ENCODE measurements at regions of chr22 and their contacts with region 1.

Region 1: DNA sequence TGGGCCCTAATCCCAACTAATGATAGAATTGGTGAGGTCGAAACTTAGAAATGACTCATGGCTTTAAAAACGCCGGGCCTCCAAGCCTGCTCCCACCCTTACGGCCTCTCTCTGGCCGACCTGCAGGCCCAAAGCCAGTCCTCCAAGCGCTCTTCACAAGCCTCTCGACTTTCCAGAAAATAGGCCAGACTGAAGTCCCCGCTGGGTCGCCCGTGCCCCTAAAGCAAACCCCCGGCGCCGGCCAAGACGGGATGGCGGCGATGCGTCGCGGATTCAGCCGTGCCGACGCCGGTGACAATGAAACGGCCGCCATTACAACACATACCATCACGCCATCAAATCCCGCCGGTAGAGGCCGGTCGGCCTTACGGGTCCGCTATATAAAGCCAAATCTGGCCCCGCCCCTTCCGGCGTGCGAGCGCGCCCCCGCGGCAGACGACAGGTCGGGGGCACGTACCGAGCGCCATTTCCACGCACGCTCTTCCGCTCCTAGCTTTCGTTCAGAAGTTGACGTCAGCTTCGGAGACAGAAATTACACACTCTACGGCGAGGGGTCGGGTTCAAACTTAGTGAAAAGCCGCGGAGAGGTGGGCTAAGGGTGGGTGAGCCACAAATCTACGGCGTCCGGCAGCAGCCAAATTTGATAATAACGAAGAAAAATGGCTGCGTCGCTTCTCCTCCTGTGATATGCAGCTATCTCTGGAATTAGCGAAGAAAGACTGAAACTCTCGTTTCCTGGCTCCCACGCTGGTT is at the start of gene RPL3:
- DNase-seq: peak; percentile 97 to 99 (median 98)
- ATAC-seq: peak; percentile 93
- H3K4me3 ChIP-seq: peak within 1 kb of the TSS; percentile 81
- H3K4me3 Mint-ChIP-seq: peak within 1 kb of the TSS; percentile 95 to 100 (median 98)
- H3K27ac ChIP-seq: peak within 1 kb of the TSS; percentile 90
- H3K27ac Mint-ChIP-seq: peak within 1 kb of the TSS; percentile 95 to 99 (median 97)
- H3K4me1 ChIP-seq: peaks cover 34 to 39% of the 10 kb centered on the region in 2 donors
- H3K4me1 Mint-ChIP-seq: peaks cover 27 to 51% (median 35%) of the 10 kb centered on the region in 7 donors
- H3K27me3 ChIP-seq: no peaks in the 10 kb centered on the region
- H3K27me3 Mint-ChIP-seq: peaks cover 0 to 3% (median 0%) of the 10 kb centered on the region in 5 donors
- total RNA-seq, gene RPL3: 1,611 to 3,932 (median 3,789) TPM

Region 2: DNA sequence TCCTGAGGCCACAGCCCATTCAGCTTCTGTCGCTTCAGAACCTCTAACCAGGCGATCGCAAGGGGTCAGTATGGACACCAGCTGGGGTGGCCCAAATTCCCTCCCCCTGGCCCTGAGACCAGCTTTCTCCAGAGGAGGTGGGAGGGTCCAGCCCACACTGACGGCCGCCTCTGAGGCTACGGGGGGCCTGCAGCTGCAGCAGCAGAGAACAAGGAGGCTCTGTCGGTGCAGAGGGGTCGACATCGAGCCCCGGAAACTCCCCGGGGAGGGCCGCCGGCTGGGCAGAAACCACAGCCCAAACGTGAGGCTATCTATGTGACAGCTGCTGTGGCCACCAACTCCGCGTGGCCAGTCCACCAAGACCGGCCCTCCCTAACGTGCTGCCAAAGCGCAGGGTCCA is 1933.0 kb before region 1 on chr22:
- CTCF ChIA-PET with region 1: no interaction called
- POLR2A ChIA-PET with region 1: no interaction called
- intact Hi-C with region 1: no loop called
- DNase-seq: no peak
- ATAC-seq: no peak
- H3K4me3 ChIP-seq: no peak overlapping the region
- H3K4me3 Mint-ChIP-seq: no peak overlapping the region
- H3K27ac ChIP-seq: no peak overlapping the region
- H3K27ac Mint-ChIP-seq: no peak overlapping the region
- H3K4me1 ChIP-seq: no peaks in the 10 kb centered on the region
- H3K4me1 Mint-ChIP-seq: peaks cover 0 to 2% (median 0%) of the 10 kb centered on the region in 7 donors
- H3K27me3 ChIP-seq: no peaks in the 10 kb centered on the region
- H3K27me3 Mint-ChIP-seq: peaks cover 0 to 15% (median 3%) of the 10 kb centered on the region in 5 donors

Region 3: GRCh38 chr22:39003165-39003638 is 316.2 kb before region 1 on chr22:
- CTCF ChIA-PET with region 1: interaction called, 5 read pairs
- POLR2A ChIA-PET with region 1: no interaction called
- intact Hi-C with region 1: loop called in 1 of 2 experiments (anchors 2 kb)
- DNase-seq: peak; percentile 40 to 69 (median 62)
- ATAC-seq: peak; percentile 95
- H3K4me3 ChIP-seq: no peak overlapping the region
- H3K4me3 Mint-ChIP-seq: no peak overlapping the region
- H3K27ac ChIP-seq: no peak overlapping the region
- H3K27ac Mint-ChIP-seq: peak overlapping the region in 4 of 9 donors; percentile 7 to 41 (median 24)
- H3K4me1 ChIP-seq: peaks cover 9 to 11% of the 10 kb centered on the region in 2 donors
- H3K4me1 Mint-ChIP-seq: peaks cover 0 to 17% (median 9%) of the 10 kb centered on the region in 7 donors
- H3K27me3 ChIP-seq: no peaks in the 10 kb centered on the region
- H3K27me3 Mint-ChIP-seq: peaks cover 0 to 15% (median 0%) of the 10 kb centered on the region in 5 donors

Region 4: GRCh38 chr22:39170825-39171622 is 148.4 kb before region 1 on chr22:
- CTCF ChIA-PET with region 1: interaction called, 262 read pairs
- POLR2A ChIA-PET with region 1: interaction called, 240 read pairs
- intact Hi-C with region 1: loop called (anchors 1 kb)
- DNase-seq: peak; percentile 64 to 94 (median 85)
- ATAC-seq: peak; percentile 85
- H3K4me3 ChIP-seq: peak overlapping the region; percentile 36
- H3K4me3 Mint-ChIP-seq: peak overlapping the region; percentile 58 to 84 (median 76)
- H3K27ac ChIP-seq: peak overlapping the region; percentile 9
- H3K27ac Mint-ChIP-seq: peak overlapping the region; percentile 82 to 98 (median 93)
- H3K4me1 ChIP-seq: peaks cover 39 to 50% of the 10 kb centered on the region in 2 donors
- H3K4me1 Mint-ChIP-seq: peaks cover 21 to 54% (median 48%) of the 10 kb centered on the region in 7 donors
- H3K27me3 ChIP-seq: no peaks in the 10 kb centered on the region
- H3K27me3 Mint-ChIP-seq: peaks cover 0 to 11% (median 0%) of the 10 kb centered on the region in 5 donors

Region 5: DNA sequence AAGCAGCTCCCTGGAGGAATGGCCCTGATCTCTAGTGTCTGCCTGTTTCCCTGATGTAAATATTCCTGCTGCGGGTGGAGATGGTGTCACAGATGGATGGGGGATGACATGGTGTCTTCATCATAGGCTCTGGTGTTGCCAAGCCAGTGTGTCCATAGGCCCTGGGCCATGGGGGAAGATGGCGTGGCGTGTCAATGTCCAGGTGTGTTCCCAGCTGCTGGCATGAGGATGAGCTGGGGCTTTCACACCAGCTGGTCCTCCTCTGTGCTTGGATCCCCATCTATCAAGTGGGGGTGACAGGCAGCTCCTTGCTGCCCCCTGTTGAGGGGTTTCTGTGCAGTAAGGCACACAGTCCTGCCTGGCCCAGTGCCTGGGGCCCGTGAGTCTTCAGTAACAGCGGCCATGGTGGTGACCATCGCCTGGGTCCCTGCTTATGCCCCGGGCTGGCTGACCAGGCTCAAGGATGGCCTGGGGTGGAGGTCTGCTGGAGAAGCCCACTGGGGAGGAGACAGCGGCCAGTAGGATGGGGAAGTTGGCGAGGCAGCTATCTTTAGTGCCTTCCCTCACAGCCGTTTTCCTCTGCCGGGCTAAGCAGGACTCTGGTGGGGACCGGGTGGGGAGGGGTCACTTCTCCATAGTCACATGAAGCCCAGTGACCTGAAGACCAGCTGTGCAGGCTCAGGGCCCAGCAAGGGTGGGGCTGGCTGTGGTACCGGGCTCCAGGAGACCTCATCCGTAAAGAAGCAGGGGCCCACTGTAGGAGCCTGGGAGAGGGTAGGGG is 12.7 kb before region 1 on chr22:
- CTCF ChIA-PET with region 1: interaction called, 4 read pairs
- POLR2A ChIA-PET with region 1: interaction called, 22 read pairs
- intact Hi-C with region 1: no loop called
- DNase-seq: peak in 5 of 9 donors; percentile 31 to 60 (median 42)
- ATAC-seq: peak; percentile 51
- H3K4me3 ChIP-seq: no peak overlapping the region
- H3K4me3 Mint-ChIP-seq: no peak overlapping the region
- H3K27ac ChIP-seq: no peak overlapping the region
- H3K27ac Mint-ChIP-seq: peak overlapping the region in 3 of 9 donors; percentile 32 to 37 (median 33)
- H3K4me1 ChIP-seq: peaks cover 0 to 5% of the 10 kb centered on the region in 2 donors
- H3K4me1 Mint-ChIP-seq: peaks cover 0 to 13% (median 7%) of the 10 kb centered on the region in 7 donors
- H3K27me3 ChIP-seq: no peaks in the 10 kb centered on the region
- H3K27me3 Mint-ChIP-seq: no peaks in the 10 kb centered on the region

Region 6: DNA sequence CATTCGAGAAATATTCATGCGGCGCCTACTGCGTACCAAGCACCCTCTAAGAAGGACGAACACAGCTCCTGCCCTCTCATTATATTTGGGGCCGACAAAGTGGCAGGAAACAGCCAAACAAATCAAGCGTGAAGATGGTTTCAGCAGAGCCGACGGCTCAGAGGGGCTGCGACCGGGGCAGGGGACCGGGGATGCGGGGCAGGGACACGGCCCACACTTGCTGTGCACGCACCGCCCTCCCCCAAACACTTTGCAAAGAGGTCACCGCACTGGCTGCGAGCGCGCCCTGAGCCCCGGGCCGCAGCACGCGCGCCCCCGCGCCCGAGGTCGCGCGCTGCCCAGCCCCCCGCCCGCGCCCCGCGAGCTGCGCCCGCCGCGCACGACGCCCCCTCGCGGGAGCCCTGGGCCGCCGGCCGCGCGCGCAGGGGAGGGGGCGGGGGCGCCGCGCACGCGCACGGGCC is 30.1 kb after region 1 on chr22:
- CTCF ChIA-PET with region 1: interaction called, 3 read pairs
- POLR2A ChIA-PET with region 1: interaction called, 16 read pairs
- intact Hi-C with region 1: no loop called
- DNase-seq: peak in 8 of 9 donors; percentile 15 to 49 (median 32)
- ATAC-seq: peak; percentile 78
- H3K4me3 ChIP-seq: peak overlapping the region; percentile 40
- H3K4me3 Mint-ChIP-seq: peak overlapping the region; percentile 75 to 92 (median 87)
- H3K27ac ChIP-seq: no peak overlapping the region
- H3K27ac Mint-ChIP-seq: peak overlapping the region in 6 of 9 donors; percentile 42 to 73 (median 57)
- H3K4me1 ChIP-seq: peaks cover 0 to 3% of the 10 kb centered on the region in 2 donors
- H3K4me1 Mint-ChIP-seq: peaks cover 0 to 14% (median 10%) of the 10 kb centered on the region in 7 donors
- H3K27me3 ChIP-seq: no peaks in the 10 kb centered on the region
- H3K27me3 Mint-ChIP-seq: peaks cover 0 to 49% (median 4%) of the 10 kb centered on the region in 5 donors

Region 7: GRCh38 chr22:39414886-39415285 is 95.4 kb after region 1 on chr22:
- CTCF ChIA-PET with region 1: no interaction called
- POLR2A ChIA-PET with region 1: interaction called, 11 read pairs
- intact Hi-C with region 1: no loop called
- DNase-seq: no peak
- ATAC-seq: no peak
- H3K4me3 ChIP-seq: no peak overlapping the region
- H3K4me3 Mint-ChIP-seq: peak overlapping the region; percentile 14 to 78 (median 72)
- H3K27ac ChIP-seq: peak overlapping the region; percentile 38
- H3K27ac Mint-ChIP-seq: peak overlapping the region in 6 of 9 donors; percentile 79 to 93 (median 89)
- H3K4me1 ChIP-seq: peaks cover 12 to 62% of the 10 kb centered on the region in 2 donors
- H3K4me1 Mint-ChIP-seq: peaks cover 41 to 91% (median 67%) of the 10 kb centered on the region in 7 donors
- H3K27me3 ChIP-seq: no peaks in the 10 kb centered on the region
- H3K27me3 Mint-ChIP-seq: no peaks in the 10 kb centered on the region

Region 8: GRCh38 chr22:39612811-39613548 is 293.5 kb after region 1 on chr22:
- CTCF ChIA-PET with region 1: no interaction called
- POLR2A ChIA-PET with region 1: no interaction called
- intact Hi-C with region 1: no loop called
- DNase-seq: peak in 7 of 9 donors; percentile 24 to 74 (median 39)
- ATAC-seq: peak; percentile 71
- H3K4me3 ChIP-seq: no peak overlapping the region
- H3K4me3 Mint-ChIP-seq: peak overlapping the region; percentile 42 to 88 (median 73)
- H3K27ac ChIP-seq: peak overlapping the region; percentile 41
- H3K27ac Mint-ChIP-seq: peak overlapping the region; percentile 64 to 95 (median 78)
- H3K4me1 ChIP-seq: peaks cover 0 to 32% of the 10 kb centered on the region in 2 donors
- H3K4me1 Mint-ChIP-seq: peaks cover 16 to 69% (median 48%) of the 10 kb centered on the region in 7 donors
- H3K27me3 ChIP-seq: no peaks in the 10 kb centered on the region
- H3K27me3 Mint-ChIP-seq: peaks cover 0 to 38% (median under 1%) of the 10 kb centered on the region in 5 donors